Activated CD4-positive, alpha-beta memory T cell treated with anti-CD3 and anti-CD28 coated beads for 36 hours (primary cell): ENCODE measurements at regions of chr10 and their contacts with region 1.

Region 1: GRCh38 chr10:6062101-6062771 is at the start of gene IL2RA:
- DNase-seq: peak; percentile 86
- H3K4me3 Mint-ChIP-seq: peak within 1 kb of the TSS; percentile 99
- H3K27ac Mint-ChIP-seq: peak within 1 kb of the TSS; percentile 99
- H3K4me1 Mint-ChIP-seq: peaks cover 62% of the 10 kb centered on the region
- H3K27me3 Mint-ChIP-seq: peaks cover 2% of the 10 kb centered on the region
- total RNA-seq, gene IL2RA: 961 to 988 TPM

Region 2: DNA sequence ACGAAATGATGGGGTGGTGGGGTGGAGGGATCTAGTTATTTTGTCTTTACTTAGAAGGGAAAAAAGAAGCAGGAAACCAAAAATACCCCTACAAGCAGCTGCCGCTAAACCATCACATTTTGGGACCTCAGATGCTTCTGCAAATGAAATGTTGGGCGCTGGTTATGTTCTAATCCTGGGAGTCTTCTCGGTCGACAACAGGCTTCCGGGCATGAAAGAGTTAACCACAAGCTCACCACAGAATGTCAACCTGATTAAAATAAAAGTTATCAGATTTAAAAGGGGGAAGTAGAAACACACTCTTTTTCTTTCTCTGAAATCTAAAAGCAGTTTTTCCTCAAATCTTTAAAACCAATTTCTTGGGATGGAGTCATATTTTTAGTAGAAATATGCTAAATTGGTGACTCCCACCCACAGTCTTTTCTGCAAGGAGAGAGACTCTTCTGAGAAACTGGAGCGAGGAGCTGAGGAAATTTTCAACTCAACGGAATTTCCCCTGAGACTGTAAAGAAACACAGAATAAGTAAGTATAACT is 16.9 kb before region 1 on chr10:
- CTCF ChIA-PET with region 1: interaction called, 3 read pairs
- POLR2A ChIA-PET with region 1: interaction called, 343 read pairs
- intact Hi-C with region 1: loop called (anchors 2 kb)
- DNase-seq: peak; percentile 67
- H3K4me3 Mint-ChIP-seq: peak overlapping the region; percentile 67
- H3K27ac Mint-ChIP-seq: peak overlapping the region; percentile 94
- H3K4me1 Mint-ChIP-seq: peaks cover 93% of the 10 kb centered on the region
- H3K27me3 Mint-ChIP-seq: no peaks in the 10 kb centered on the region

Region 3: DNA sequence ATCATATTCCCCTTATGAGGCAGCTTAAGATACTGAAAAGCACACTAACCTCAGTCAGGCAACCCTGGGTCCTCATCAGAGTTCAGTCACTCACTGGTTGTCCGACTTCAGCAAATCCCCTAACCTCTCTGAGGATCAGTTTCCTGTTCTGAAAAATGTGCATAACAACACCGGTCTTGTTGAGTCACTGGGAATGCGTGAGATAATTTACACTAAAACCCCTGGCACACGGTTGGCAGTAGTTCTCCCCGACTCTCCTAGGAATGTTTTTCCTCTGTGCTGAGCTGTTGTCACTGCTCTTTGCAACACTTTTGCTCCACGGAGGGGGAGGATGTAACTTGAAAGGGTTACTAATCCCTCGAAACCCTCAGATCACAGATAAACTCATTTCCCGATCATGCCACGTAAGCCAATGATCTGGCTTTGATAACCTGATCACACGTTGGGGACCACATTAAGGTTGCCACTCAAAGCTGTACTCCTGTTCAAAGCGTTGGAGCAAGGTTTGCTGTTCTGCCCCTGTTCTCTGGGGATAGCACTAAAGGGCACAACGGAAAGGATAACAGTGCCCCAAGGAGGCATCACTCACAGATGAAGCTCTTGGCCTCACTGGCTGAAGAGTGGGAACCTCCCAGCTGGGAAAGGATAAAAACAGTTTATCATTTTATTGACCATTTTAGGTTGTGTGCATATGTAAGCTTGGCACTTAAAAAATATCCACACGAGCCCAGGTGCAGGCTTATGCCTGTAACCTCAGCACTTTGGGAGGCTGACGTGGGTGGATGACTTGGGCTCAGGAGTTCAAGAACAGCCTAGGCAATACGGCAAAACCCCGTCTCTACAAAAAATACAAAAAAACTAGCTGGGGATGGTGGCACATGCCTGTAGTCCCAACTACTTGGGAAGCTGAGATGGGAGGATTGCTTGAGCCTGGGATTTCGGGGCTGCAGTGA is 21.6 kb after region 1 on chr10:
- CTCF ChIA-PET with region 1: interaction called, 167 read pairs
- POLR2A ChIA-PET with region 1: interaction called, 343 read pairs
- intact Hi-C with region 1: loop called (anchors 1 kb)
- DNase-seq: peak; percentile 87
- H3K4me3 Mint-ChIP-seq: peak overlapping the region; percentile 71
- H3K27ac Mint-ChIP-seq: peak overlapping the region; percentile 94
- H3K4me1 Mint-ChIP-seq: peaks cover 65% of the 10 kb centered on the region
- H3K27me3 Mint-ChIP-seq: no peaks in the 10 kb centered on the region